ENCODE measurements at regions of chr2 and their contacts with region 1.

Region 1: GRCh38 chr2:73212448-73213176 is 1.4 kb upstream of the SMYD5 start:
- DNase-seq: peak; percentile 70 to 87
- H3K4me3 ChIP-seq: no peak overlapping the region
- H3K4me3 Mint-ChIP-seq: peak overlapping the region; percentile 89
- H3K27ac Mint-ChIP-seq: no peak overlapping the region
- H3K4me1 ChIP-seq: peaks cover 20% of the 10 kb centered on the region
- H3K4me1 Mint-ChIP-seq: peaks cover 9% of the 10 kb centered on the region
- H3K27me3 ChIP-seq: no peaks in the 10 kb centered on the region
- H3K27me3 Mint-ChIP-seq: no peaks in the 10 kb centered on the region
- CTCF ChIP-seq: peak; percentile 95

Region 2: GRCh38 chr2:73085691-73086360 is 126.8 kb before region 1 on chr2:
- CTCF ChIA-PET with region 1: interaction called, 16 read pairs
- POLR2A ChIA-PET with region 1: no interaction called
- intact Hi-C with region 1: loop called (anchors 1 kb)
- DNase-seq: peak; percentile 87 to 89
- H3K4me3 ChIP-seq: no peak overlapping the region
- H3K4me3 Mint-ChIP-seq: no peak overlapping the region
- H3K27ac Mint-ChIP-seq: no peak overlapping the region
- H3K4me1 ChIP-seq: peaks cover 27% of the 10 kb centered on the region
- H3K4me1 Mint-ChIP-seq: peaks cover 24% of the 10 kb centered on the region
- H3K27me3 ChIP-seq: no peaks in the 10 kb centered on the region
- H3K27me3 Mint-ChIP-seq: no peaks in the 10 kb centered on the region
- CTCF ChIP-seq: peak; percentile 93 to 95

Region 3: GRCh38 chr2:73163483-73164367 is 48.9 kb before region 1 on chr2:
- CTCF ChIA-PET with region 1: interaction called, 7 read pairs
- POLR2A ChIA-PET with region 1: no interaction called
- intact Hi-C with region 1: loop called (anchors 5 kb)
- DNase-seq: peak; percentile 80 to 86
- H3K4me3 ChIP-seq: no peak overlapping the region
- H3K4me3 Mint-ChIP-seq: no peak overlapping the region
- H3K27ac Mint-ChIP-seq: no peak overlapping the region
- H3K4me1 ChIP-seq: no peaks in the 10 kb centered on the region
- H3K4me1 Mint-ChIP-seq: no peaks in the 10 kb centered on the region
- H3K27me3 ChIP-seq: no peaks in the 10 kb centered on the region
- H3K27me3 Mint-ChIP-seq: peaks cover 8% of the 10 kb centered on the region
- CTCF ChIP-seq: peak; percentile 86 to 92

Region 4: GRCh38 chr2:73187549-73187948 is 25.1 kb before region 1 on chr2:
- CTCF ChIA-PET with region 1: interaction called, 58 read pairs
- POLR2A ChIA-PET with region 1: interaction called, 8 read pairs
- intact Hi-C with region 1: loop called (anchors 1 kb)
- DNase-seq: no peak
- H3K4me3 ChIP-seq: no peak overlapping the region
- H3K4me3 Mint-ChIP-seq: no peak overlapping the region
- H3K27ac Mint-ChIP-seq: no peak overlapping the region
- H3K4me1 ChIP-seq: peaks cover 19% of the 10 kb centered on the region
- H3K4me1 Mint-ChIP-seq: peaks cover 19% of the 10 kb centered on the region
- H3K27me3 ChIP-seq: no peaks in the 10 kb centered on the region
- H3K27me3 Mint-ChIP-seq: no peaks in the 10 kb centered on the region
- CTCF ChIP-seq: no peak

Region 5: GRCh38 chr2:73202156-73203054 is 10.2 kb before region 1 on chr2 and contains the start of gene NOTO:
- CTCF ChIA-PET with region 1: interaction called, 4 read pairs
- POLR2A ChIA-PET with region 1: no interaction called
- intact Hi-C with region 1: loop called (anchors 1 kb)
- DNase-seq: no peak
- H3K4me3 ChIP-seq: peak within 1 kb of the TSS; percentile 15; the same call in 1 of the 2 replicates
- H3K4me3 Mint-ChIP-seq: peak within 1 kb of the TSS; percentile 27
- H3K27ac Mint-ChIP-seq: no peak within 1 kb of the TSS
- H3K4me1 ChIP-seq: no peaks in the 10 kb centered on the region; the same call in 1 of the 2 replicates
- H3K4me1 Mint-ChIP-seq: no peaks in the 10 kb centered on the region
- H3K27me3 ChIP-seq: no peaks in the 10 kb centered on the region
- H3K27me3 Mint-ChIP-seq: no peaks in the 10 kb centered on the region
- CTCF ChIP-seq: no peak
- total RNA-seq, gene NOTO: 0.12 TPM in 1 of 2 replicates, not detected in the other

Region 6: DNA sequence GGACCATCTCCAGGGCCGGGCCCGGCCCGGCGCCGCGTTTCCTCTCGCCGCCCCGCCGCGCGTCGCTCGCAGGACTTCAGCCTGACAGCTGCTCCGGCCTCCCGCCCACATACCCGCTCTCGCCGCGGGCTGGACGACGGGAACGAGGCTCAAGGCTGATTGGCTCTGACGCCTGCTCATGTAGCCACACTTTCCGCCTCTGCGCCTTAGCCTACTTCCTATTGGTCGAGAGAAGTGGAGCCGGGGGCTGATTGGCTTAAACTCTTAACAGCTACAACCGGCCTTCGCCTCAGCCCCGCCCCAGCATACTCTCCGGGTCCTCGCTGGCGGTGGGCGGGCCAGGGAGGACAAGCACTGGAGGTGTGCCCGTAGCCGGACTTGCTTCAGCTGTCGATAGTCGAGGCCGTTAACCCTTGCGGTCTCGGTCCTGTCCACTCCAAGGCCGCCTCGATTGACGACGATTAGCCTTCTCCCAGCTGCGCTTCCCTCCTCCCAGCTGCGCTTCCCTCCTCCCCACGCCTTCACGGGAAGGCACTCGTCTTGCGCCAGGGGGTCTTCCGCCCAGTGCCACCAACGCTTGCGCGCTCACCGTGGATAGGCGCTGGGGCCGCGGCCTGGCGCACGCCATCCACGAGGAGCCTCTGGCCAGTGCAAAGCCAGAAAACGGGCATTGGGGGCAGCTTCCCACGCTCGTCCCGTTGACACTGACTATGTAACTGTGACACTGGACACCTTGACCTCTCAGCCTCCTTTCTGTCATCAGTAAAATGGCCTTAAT is 20.7 kb after region 1 on chr2 and contains the start of gene PRADC1:
- CTCF ChIA-PET with region 1: interaction called, 10 read pairs
- POLR2A ChIA-PET with region 1: interaction called, 8 read pairs
- intact Hi-C with region 1: loop called (anchors 1 kb)
- DNase-seq: peak; percentile 99 to 100
- H3K4me3 ChIP-seq: peak within 1 kb of the TSS; percentile 78
- H3K4me3 Mint-ChIP-seq: peak within 1 kb of the TSS; percentile 91
- H3K27ac Mint-ChIP-seq: peak within 1 kb of the TSS; percentile 98
- H3K4me1 ChIP-seq: peaks cover 7% of the 10 kb centered on the region; the same call in 1 of the 2 replicates
- H3K4me1 Mint-ChIP-seq: peaks cover 20% of the 10 kb centered on the region
- H3K27me3 ChIP-seq: no peaks in the 10 kb centered on the region
- H3K27me3 Mint-ChIP-seq: no peaks in the 10 kb centered on the region
- CTCF ChIP-seq: no peak
- total RNA-seq, gene PRADC1: 24.1 and 25.4 TPM in 2 replicates

Region 7: GRCh38 chr2:73260034-73260984 is 47.7 kb after region 1 on chr2:
- CTCF ChIA-PET with region 1: interaction called, 6 read pairs
- POLR2A ChIA-PET with region 1: no interaction called
- intact Hi-C with region 1: loop called (anchors 2 kb)
- DNase-seq: peak; percentile 71 to 79
- H3K4me3 ChIP-seq: no peak overlapping the region
- H3K4me3 Mint-ChIP-seq: no peak overlapping the region
- H3K27ac Mint-ChIP-seq: no peak overlapping the region
- H3K4me1 ChIP-seq: no peaks in the 10 kb centered on the region
- H3K4me1 Mint-ChIP-seq: no peaks in the 10 kb centered on the region
- H3K27me3 ChIP-seq: no peaks in the 10 kb centered on the region
- H3K27me3 Mint-ChIP-seq: no peaks in the 10 kb centered on the region
- CTCF ChIP-seq: peak; percentile 55 to 80

Region 8: GRCh38 chr2:73359915-73360697 is 147.5 kb after region 1 on chr2:
- CTCF ChIA-PET with region 1: no interaction called
- POLR2A ChIA-PET with region 1: no interaction called
- intact Hi-C with region 1: no loop called
- DNase-seq: peak in 1 of 2 experiments; percentile 9
- H3K4me3 ChIP-seq: no peak overlapping the region
- H3K4me3 Mint-ChIP-seq: no peak overlapping the region
- H3K27ac Mint-ChIP-seq: no peak overlapping the region
- H3K4me1 ChIP-seq: no peaks in the 10 kb centered on the region
- H3K4me1 Mint-ChIP-seq: no peaks in the 10 kb centered on the region
- H3K27me3 ChIP-seq: no peaks in the 10 kb centered on the region; the same call in 1 of the 2 replicates
- H3K27me3 Mint-ChIP-seq: peaks cover 10% of the 10 kb centered on the region
- CTCF ChIP-seq: peak; percentile 32 to 53

Measured in Caco-2 (cell line).